Testis (tissue), 5 donors: ENCODE measurements at regions of chr10 and their contacts with region 1.

Region 1: GRCh38 chr10:124741281-124741921 is 2.8 kb downstream of the FAM53B start:
- DNase-seq: peak; percentile 94
- H3K4me3 ChIP-seq: peak overlapping the region in 1 of 2 donors; percentile 88
- H3K27ac ChIP-seq: peak overlapping the region; percentile 89 to 94
- H3K4me1 ChIP-seq: peaks cover 68% of the 10 kb centered on the region
- H3K27me3 ChIP-seq: no peaks in the 10 kb centered on the region
- CTCF ChIP-seq: peak; percentile 87 to 96 (median 92)
- POLR2A ChIP-seq: no peak

Region 2: GRCh38 chr10:124535731-124536495 is 205.5 kb before region 1 on chr10:
- intact Hi-C with region 1: loop called (anchors 2 kb)
- DNase-seq: no peak
- H3K4me3 ChIP-seq: no peak overlapping the region
- H3K27ac ChIP-seq: peak overlapping the region; percentile 75
- H3K4me1 ChIP-seq: peaks cover 65% of the 10 kb centered on the region
- H3K27me3 ChIP-seq: no peaks in the 10 kb centered on the region
- CTCF ChIP-seq: no peak
- POLR2A ChIP-seq: no peak

Region 3: GRCh38 chr10:124626759-124627380 is 114.5 kb before region 1 on chr10:
- intact Hi-C with region 1: loop called (anchors 5 kb)
- DNase-seq: no peak
- H3K4me3 ChIP-seq: no peak overlapping the region
- H3K27ac ChIP-seq: peak overlapping the region; percentile 5 to 38
- H3K4me1 ChIP-seq: peaks cover 74% of the 10 kb centered on the region
- H3K27me3 ChIP-seq: no peaks in the 10 kb centered on the region
- CTCF ChIP-seq: no peak
- POLR2A ChIP-seq: no peak

Region 4: DNA sequence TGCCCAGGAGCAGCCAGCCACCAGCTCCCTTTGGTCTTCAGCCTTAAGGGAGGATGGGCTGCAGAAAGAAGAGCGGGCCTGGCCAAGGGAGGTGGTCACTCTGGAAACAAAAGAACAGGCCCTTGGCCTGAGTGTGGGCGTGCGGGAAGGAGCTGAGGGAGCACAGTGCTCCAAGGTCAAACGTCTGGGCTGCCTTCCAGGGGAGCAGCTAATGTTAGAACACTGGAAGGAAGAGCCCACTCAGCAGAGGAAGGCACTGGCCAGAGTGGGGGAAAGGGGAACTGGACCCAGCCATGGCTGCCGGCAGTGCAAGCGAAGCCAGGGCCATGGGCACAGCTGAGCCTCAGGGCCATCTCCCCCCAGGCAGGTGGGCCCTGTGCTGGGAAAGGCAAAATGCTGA is 40.0 kb before region 1 on chr10:
- intact Hi-C with region 1: loop called (anchors 5 kb)
- DNase-seq: peak; percentile 99
- H3K4me3 ChIP-seq: no peak overlapping the region
- H3K27ac ChIP-seq: peak overlapping the region; percentile 75 to 81
- H3K4me1 ChIP-seq: peaks cover 90% of the 10 kb centered on the region
- H3K27me3 ChIP-seq: no peaks in the 10 kb centered on the region
- CTCF ChIP-seq: no peak
- POLR2A ChIP-seq: no peak

Region 5: DNA sequence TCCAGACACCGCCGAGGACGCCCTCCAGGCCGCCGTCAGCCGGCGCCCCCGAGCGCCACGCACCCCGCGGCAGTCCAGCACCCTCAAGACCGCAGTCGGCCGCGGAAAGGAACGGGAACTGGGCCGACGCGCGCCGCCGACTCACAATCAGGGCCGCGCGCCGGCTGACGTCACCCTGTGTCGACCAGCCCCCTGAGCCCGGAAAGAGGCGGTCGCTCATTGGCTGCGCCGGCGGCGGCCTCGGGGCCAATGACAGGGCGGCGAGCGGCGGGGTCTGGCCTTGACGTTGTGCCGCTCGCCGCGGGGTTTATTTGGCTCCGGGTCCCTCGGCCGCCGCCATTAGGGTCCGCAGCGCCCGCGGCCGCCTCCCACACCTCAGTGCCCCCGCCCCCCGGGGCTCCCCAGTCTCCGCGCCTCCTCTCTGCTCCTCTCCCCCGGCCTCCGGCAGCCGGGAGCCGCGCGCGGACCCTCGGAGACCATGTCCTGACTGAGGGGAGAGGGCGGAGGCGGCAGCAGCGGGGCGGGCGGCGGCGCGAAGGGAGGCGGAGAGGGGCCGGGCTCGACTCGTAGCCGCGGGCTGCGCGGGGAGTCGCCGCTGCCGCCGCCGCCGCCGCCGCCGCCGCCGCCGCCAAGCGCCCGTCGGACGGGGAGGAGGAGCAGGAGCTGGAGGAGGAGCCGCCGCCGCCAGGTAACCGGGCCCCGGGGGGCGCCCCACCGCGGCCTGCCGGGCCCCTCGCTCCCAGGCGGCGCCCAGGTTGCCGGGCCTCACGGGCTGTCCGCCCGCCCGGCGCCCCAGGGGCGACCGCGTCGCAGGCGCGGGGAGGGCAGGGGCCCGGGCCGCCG is 175.4 kb after region 1 on chr10:
- intact Hi-C with region 1: no loop called
- DNase-seq: peak; percentile 99
- H3K4me3 ChIP-seq: peak overlapping the region; percentile 83 to 94
- H3K27ac ChIP-seq: peak overlapping the region; percentile 98 to 100
- H3K4me1 ChIP-seq: peaks cover 20% of the 10 kb centered on the region
- H3K27me3 ChIP-seq: no peaks in the 10 kb centered on the region
- CTCF ChIP-seq: no peak
- POLR2A ChIP-seq: peak; percentile 50